Calu3 (cell line): ENCODE measurements at regions of chr16 and their contacts with region 1.

Region 1: DNA sequence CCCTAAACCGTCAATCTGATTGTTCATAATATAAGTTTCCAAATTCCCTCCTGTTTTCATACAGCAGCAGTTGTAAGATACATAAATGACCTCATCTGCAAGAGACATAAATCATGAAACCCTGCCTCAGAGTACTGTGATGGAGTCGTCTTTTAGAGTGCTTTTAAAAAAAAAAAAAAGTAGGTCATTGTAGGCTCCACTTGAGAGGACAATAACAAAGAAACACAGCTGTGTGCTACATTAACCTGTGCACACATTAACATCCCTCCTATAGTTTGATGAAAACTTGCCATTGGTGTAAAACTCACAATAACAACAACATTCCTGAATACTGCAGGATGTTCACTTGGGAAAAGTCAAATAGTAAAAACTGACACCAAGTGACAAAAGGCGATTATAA is 56.5 kb downstream of the XPO6 start:
- DNase-seq: no peak
- H3K4me3 Mint-ChIP-seq: no peak overlapping the region
- H3K27ac Mint-ChIP-seq: no peak overlapping the region
- H3K4me1 Mint-ChIP-seq: no peaks in the 10 kb centered on the region
- H3K27me3 Mint-ChIP-seq: no peaks in the 10 kb centered on the region
- CTCF ChIP-seq: no peak

Region 2: GRCh38 chr16:28098959-28099945 is 56.0 kb before region 1 on chr16:
- CTCF ChIA-PET with region 1: no interaction called
- intact Hi-C with region 1: no loop called
- DNase-seq: no peak
- H3K4me3 Mint-ChIP-seq: no peak overlapping the region
- H3K27ac Mint-ChIP-seq: no peak overlapping the region
- H3K4me1 Mint-ChIP-seq: no peaks in the 10 kb centered on the region
- H3K27me3 Mint-ChIP-seq: no peaks in the 10 kb centered on the region
- CTCF ChIP-seq: no peak

Region 3: GRCh38 chr16:28133666-28134065 is 21.6 kb before region 1 on chr16:
- CTCF ChIA-PET with region 1: interaction called, 6 read pairs
- intact Hi-C with region 1: loop called (anchors 2 kb)
- DNase-seq: no peak
- H3K4me3 Mint-ChIP-seq: no peak overlapping the region
- H3K27ac Mint-ChIP-seq: no peak overlapping the region
- H3K4me1 Mint-ChIP-seq: no peaks in the 10 kb centered on the region
- H3K27me3 Mint-ChIP-seq: no peaks in the 10 kb centered on the region
- CTCF ChIP-seq: no peak

Region 4: DNA sequence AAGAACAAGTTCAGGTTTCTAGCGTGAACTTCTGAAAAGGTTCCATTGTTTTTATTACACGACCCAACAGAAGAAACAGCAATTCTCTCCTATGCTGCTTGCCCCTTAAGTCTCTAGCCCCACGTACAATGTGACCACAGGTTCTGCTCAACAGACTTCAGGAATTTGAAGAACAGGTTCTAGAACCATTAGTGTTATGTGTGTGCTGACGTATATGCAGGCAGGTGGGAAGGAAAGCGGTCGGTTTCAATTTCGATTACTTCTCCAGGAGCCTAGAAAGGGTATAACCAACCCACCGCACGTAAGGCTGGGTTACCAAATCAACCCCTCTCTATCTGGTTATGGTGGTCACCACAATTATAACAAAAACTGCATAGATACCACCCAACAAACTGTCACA is 17.0 kb after region 1 on chr16:
- CTCF ChIA-PET with region 1: no interaction called
- intact Hi-C with region 1: no loop called
- DNase-seq: no peak
- H3K4me3 Mint-ChIP-seq: no peak overlapping the region
- H3K27ac Mint-ChIP-seq: no peak overlapping the region
- H3K4me1 Mint-ChIP-seq: peaks cover 5% of the 10 kb centered on the region
- H3K27me3 Mint-ChIP-seq: no peaks in the 10 kb centered on the region
- CTCF ChIP-seq: no peak

Region 5: DNA sequence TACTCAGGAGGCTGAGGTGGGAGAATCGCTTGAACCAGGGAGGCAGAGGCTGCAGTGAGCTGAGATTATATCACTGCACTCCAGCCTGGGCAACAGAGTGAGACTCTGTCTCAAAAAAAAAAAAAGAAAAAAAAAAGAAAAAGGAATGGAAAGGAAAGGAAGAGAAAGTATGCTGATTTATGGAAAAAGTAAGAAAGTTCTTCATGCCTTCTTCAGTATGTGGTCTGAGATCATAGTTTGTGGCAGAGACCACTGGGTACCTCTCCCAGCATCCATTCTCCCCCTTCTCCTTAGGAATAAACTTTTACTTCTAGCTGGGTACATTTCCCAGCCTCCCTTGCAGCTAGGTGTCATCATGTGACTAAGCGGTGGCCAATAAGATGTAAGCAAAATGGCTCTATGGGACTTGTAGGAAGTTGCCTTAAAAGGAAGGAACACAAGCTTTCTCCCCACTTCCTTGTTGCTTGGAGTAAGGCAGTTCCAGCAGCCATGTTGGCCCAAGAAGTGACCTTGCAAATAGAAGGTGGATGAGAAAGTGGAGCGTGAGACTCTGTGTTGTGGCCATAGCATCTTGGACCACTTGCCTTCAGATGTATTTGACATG is 82.6 kb after region 1 on chr16:
- CTCF ChIA-PET with region 1: no interaction called
- intact Hi-C with region 1: no loop called
- DNase-seq: no peak
- H3K4me3 Mint-ChIP-seq: no peak overlapping the region
- H3K27ac Mint-ChIP-seq: no peak overlapping the region
- H3K4me1 Mint-ChIP-seq: no peaks in the 10 kb centered on the region
- H3K27me3 Mint-ChIP-seq: peaks cover 13% of the 10 kb centered on the region
- CTCF ChIP-seq: no peak

Region 6: GRCh38 chr16:28277537-28278388 is 122.5 kb after region 1 on chr16:
- CTCF ChIA-PET with region 1: no interaction called
- intact Hi-C with region 1: no loop called
- DNase-seq: peak; percentile 88
- H3K4me3 Mint-ChIP-seq: peak overlapping the region; percentile 61
- H3K27ac Mint-ChIP-seq: no peak overlapping the region
- H3K4me1 Mint-ChIP-seq: peaks cover 14% of the 10 kb centered on the region
- H3K27me3 Mint-ChIP-seq: peaks cover 64% of the 10 kb centered on the region
- CTCF ChIP-seq: peak; percentile 98